BJ (cell line): ENCODE measurements at regions of chr16 and their contacts with region 1.

Region 1: DNA sequence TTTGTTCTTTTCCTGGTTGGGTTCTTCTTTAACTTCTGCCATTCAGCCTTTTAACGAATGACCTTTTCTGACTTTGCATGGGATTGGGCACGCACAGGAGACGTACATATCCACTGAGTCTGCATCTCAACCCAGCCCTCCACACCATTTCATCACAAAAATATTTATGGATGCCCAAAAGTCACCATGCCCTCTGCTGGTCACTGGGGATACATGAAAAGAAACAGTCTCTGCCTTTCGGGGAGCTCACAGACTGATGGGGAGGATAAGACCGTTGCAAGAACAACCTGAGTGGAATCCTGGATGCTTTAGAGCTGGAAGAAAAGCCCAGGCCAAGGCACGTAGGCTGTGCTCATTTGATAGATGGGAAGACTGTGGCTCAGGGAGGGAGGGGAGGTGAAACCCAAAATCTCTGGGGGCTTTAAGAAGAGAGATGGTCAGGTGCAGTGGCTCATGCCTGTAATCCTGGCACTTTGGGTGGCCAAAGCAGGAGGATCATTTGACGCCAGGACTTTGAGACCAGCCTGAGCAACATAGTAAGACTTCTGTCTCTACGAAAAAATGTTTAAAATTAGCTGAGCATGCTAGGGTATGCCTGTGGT is 7.9 kb upstream of the MT2A start:
- DNase-seq: no peak
- H3K4me3 ChIP-seq: no peak overlapping the region
- H3K27me3 ChIP-seq: peaks cover 2% of the 10 kb centered on the region; the same call in 1 of the 2 replicates
- CTCF ChIP-seq: peak; percentile 78

Region 2: DNA sequence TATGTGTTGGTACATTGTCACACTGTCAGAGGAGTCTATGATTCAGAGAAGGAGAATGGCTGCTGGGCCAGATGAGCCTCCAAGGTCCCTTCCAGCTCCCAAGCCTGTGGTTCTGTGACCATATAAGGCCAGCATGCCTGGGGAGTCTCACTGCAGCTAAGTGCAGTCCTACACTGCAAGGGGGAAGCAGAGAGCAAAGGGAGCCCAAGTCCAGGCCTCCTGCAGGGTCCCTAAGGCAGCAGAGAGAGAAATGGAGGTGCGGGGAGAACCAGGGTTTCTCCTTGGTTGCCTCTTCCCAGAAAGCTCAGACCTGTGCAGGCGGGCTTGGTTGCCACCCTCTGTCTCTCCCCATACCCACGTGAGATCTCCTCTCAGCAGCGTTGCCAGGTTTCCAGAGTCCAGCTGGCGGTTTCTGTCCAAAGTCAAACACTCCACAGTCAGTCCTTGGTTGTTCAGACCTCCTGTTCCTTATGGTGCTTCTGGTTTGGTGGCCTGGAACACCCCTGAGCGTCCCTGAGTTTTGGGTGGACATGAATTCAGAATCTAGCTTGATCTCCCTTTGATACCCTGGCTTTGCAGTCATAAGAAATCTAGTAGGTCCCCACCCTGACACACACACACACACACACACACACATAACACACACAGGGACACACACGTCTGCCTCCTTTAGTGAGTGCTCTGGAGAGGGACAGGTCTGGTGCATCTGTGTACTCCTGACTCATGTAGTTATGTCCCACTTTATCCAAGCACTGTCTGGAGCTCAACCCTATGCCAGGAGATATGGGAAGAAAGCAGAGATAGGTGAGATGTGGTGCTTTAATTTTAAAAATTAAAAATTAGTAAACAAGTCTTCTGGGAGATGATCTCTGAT is 330.5 kb before region 1 on chr16:
- CTCF ChIA-PET with region 1: no interaction called
- POLR2A ChIA-PET with region 1: no interaction called
- DNase-seq: peak; percentile 56
- H3K4me3 ChIP-seq: no peak overlapping the region
- H3K27me3 ChIP-seq: no peaks in the 10 kb centered on the region
- CTCF ChIP-seq: peak; percentile 71

Region 3: GRCh38 chr16:56401482-56401881 is 199.0 kb before region 1 on chr16:
- CTCF ChIA-PET with region 1: no interaction called
- POLR2A ChIA-PET with region 1: no interaction called
- DNase-seq: no peak
- H3K4me3 ChIP-seq: no peak overlapping the region
- H3K27me3 ChIP-seq: no peaks in the 10 kb centered on the region
- CTCF ChIP-seq: peak; percentile 24; the same call in 1 of the 2 replicates

Region 4: DNA sequence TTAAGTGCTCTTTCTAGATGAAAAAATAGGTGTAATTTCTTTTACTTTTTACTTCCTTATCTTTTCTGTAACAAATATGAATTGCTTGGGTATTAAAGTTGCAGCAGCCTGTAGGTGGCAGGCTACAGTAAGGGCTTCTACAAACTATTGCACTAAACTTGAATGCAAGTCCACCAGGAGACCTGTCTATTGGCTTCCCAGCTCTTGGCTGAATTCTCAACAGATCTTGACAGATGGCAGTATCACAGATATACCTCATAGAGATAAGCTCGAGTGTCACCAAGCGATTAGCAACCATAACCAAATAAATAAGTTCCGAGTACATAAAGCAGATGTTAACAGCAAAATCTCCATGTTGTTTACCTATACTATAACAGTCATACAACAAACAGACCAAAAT is 86.5 kb before region 1 on chr16:
- CTCF ChIA-PET with region 1: interaction called, 25 read pairs
- POLR2A ChIA-PET with region 1: no interaction called
- DNase-seq: peak; percentile 15
- H3K4me3 ChIP-seq: no peak overlapping the region
- H3K27me3 ChIP-seq: no peaks in the 10 kb centered on the region
- CTCF ChIP-seq: peak; percentile 75

Region 5: GRCh38 chr16:56519459-56520250 is 80.8 kb before region 1 on chr16 and contains the start of gene BBS2:
- CTCF ChIA-PET with region 1: interaction called, 25 read pairs
- POLR2A ChIA-PET with region 1: no interaction called
- DNase-seq: peak; percentile 26
- H3K4me3 ChIP-seq: peak within 1 kb of the TSS; percentile 97
- H3K27me3 ChIP-seq: no peaks in the 10 kb centered on the region
- CTCF ChIP-seq: no peak
- polyA plus RNA-seq, gene BBS2: 33.8 and 43.1 TPM in 2 replicates

Region 6: DNA sequence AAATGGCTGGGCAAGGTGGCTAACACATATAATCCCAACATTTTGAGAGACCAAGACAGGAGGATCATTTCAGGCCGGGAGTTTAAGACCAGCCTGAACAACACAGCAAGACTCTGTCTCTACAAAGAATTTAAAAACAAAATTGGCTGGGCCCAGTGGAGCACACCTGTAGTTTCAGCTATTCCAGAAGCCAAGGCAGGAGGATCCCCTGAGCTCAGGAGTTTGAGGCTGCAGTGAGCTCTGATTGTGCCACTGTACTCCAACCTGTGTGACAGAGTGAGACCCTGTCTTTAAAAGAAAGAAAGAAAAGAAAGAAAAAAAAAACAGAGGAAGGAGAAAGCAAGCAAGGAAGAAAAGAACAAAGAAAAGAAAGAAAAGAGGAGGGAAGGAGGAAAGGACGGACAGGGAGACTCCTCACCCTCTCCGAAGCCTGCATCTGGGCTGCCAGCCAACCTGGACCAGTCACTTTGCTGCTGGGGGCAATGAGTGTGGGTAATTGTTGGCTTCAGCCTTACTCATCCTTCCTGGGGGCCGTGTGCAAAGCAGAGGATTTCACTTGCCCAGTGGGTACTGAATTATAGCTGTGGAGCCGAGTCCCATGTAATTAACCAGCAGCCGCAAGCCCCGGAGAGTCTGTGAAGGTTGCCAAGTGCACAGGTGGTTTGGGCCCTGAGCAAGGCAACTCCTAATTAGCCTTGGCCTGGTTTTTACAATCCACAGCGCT is 42.3 kb before region 1 on chr16:
- CTCF ChIA-PET with region 1: interaction called, 3 read pairs
- POLR2A ChIA-PET with region 1: interaction called, 20 read pairs
- DNase-seq: no peak
- H3K4me3 ChIP-seq: no peak overlapping the region
- H3K27me3 ChIP-seq: peaks cover 11% of the 10 kb centered on the region
- CTCF ChIP-seq: no peak

Region 7: DNA sequence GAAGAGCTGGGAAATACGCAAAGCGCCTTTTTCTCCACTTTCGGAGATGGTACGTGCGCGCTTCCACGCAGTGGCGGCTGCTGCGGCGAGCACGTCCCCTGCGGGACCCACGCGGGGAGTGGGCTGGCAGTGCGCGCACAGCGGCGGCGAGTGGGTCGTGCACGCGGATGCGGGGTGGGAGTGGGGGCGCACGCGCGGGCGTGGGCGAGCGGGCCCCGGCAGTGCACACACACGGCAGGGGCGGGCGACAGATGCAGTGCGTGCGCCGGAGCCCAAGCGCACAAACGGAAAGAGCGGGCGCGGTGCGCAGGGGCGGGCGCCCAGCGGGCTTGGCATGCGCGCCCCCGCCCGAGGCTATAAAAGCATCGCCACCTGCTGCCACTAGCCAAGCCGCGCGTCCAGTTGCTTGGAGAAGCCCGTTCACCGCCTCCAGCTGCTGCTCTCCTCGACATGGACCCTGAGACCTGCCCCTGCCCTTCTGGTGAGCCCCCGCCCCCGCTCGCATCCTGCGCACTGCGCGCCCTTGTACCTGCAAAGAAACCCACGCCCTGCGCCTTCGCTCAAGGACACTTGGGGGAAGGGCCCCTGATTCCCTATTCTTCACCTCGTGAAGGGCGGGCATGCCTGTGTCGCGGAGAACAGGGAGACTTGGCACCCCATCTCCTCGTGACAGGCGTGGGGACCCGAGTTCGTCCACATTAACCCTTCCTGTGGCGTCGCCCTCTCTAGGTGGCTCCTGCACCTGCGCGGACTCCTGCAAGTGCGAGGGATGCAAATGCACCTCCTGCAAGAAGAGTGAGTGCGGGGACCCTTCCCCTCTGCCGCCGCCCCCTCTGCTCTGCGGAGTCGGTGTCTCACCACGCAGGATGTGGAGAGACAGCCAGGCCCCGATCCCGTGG is 11.1 kb before region 1 on chr16 and contains the start of gene MT3:
- CTCF ChIA-PET with region 1: interaction called, 18 read pairs
- POLR2A ChIA-PET with region 1: no interaction called
- DNase-seq: no peak
- H3K4me3 ChIP-seq: peak within 1 kb of the TSS; percentile 28
- H3K27me3 ChIP-seq: peaks cover 34% of the 10 kb centered on the region
- CTCF ChIP-seq: no peak
- polyA plus RNA-seq, gene MT3: not detected in 2 replicates

Region 8: DNA sequence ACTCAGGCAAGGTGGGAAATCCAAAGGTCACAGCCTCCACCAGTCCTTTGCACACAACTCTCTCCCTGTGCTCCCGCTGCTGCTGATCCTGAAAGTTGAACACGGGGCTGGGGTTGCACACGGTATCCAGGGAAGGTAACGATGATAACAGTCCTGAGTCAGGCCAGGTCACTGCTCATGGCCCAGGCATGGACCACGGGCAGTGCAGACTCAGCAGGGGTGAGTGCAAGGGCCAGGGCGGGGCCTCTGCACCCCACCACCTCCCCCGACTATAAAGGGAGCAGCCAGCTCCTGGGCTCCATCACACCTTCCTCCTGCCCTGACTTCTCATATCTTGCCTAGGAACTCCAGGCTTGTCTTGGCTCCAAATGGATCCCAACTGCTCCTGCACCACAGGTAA is 51.1 kb after region 1 on chr16 and contains the start of gene MT1B:
- CTCF ChIA-PET with region 1: no interaction called
- POLR2A ChIA-PET with region 1: no interaction called
- DNase-seq: no peak
- H3K4me3 ChIP-seq: no peak within 1 kb of the TSS
- H3K27me3 ChIP-seq: peaks cover 41% of the 10 kb centered on the region
- CTCF ChIP-seq: no peak
- polyA plus RNA-seq, gene MT1B: not detected in 2 replicates

Region 9: GRCh38 chr16:56700195-56700594 is 99.7 kb after region 1 on chr16:
- CTCF ChIA-PET with region 1: interaction called, 100 read pairs
- POLR2A ChIA-PET with region 1: no interaction called
- DNase-seq: no peak
- H3K4me3 ChIP-seq: no peak overlapping the region
- H3K27me3 ChIP-seq: no peaks in the 10 kb centered on the region; the same call in 1 of the 2 replicates
- CTCF ChIP-seq: no peak

Region 10: DNA sequence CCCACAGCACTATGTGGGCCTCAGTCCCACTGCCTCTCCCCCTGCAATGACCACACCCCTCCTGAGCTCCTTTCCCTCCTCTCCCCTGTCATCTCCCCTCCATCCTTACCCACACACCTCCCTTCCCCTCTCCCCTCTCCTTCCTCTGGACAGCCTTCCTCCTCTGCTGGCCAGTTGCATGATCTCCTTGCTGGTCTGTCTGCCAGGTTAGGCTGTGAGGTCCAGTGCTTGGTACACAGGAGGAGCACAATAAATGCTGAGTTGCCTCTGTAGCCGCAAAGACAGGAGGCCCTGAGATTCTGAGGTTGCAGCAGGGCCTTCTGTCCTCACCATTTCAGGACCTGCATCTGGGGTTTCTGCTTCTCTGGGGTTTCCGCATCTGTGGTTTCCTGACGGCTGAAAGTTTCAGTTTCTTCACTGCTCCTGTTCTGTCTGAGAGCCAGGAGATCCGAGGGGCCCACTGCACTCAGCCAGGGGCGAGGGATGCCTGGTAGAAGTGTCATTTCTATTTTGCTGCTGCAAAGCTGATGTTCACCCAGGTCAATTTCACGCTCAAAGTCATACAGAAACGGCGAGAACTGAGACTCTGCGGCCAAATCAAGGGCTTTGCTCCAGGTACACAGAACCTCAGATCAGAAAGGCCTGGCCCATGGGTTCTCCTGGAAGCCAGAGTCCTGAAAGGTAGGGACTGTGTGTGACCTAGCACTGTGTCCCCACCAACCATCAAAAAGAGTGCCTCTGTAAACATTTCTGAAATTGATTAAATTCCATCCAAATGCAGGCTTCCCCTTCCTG is 259.9 kb after region 1 on chr16:
- CTCF ChIA-PET with region 1: no interaction called
- POLR2A ChIA-PET with region 1: no interaction called
- DNase-seq: no peak
- H3K4me3 ChIP-seq: no peak overlapping the region
- H3K27me3 ChIP-seq: no peaks in the 10 kb centered on the region
- CTCF ChIP-seq: no peak